PC-3 (cell line): ENCODE measurements at regions of chr20 and their contacts with region 1.

Region 1: DNA sequence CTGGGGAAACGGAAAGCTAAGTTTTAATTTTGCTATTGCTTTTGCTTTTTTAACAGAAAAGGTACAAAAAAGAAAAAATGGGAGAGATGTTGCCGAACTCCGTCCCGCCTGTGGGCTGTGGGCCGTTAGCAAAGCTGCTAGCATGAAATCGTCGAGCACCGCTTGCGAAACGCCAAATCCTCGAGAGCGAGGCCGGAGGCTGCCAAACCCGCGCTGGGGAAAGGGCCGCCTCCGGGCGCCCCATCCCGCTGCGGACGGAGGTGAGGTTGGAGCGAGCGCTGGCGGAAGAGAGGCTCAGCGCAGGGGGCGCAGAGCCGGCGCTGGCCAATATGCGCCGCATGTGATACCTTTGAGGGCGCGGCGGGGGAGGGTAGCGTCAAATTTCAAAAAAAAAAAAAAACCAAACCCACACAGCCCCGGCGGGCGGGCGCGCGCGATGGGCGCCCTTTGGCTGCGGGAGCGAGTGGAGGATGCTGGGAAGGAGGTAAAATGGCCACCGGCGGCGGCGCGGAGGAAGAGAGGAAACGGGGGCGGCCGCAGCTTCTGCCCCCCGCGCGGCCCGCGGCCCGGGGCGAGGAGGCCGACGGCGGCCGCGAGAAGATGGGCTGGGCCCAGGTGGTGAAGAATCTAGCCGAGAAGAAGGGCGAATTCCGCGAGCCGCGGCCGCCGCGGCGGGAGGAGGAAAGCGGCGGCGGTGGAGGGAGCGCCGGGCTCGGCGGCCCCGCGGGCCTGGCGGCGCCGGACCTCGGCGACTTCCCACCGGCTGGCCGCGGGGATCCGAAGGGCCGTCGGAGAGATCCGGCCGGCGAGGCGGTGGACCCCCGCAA is at the start of gene ZCCHC3:
- DNase-seq: peak; percentile 96
- ATAC-seq: peak; percentile 85
- H3K4me3 ChIP-seq: peak within 1 kb of the TSS; percentile 80
- H3K27ac ChIP-seq: peak within 1 kb of the TSS; percentile 75
- H3K4me1 ChIP-seq: peaks cover 29% of the 10 kb centered on the region
- H3K27me3 ChIP-seq: no peaks in the 10 kb centered on the region
- CTCF ChIP-seq: 0 out of 2 replicates have a peak, but pooled peaks have one; percentile 29
- total RNA-seq, gene ZCCHC3: 18.5 and 21.5 TPM in 2 replicates

Region 2: GRCh38 chr20:226958-227357 is 70.4 kb before region 1 on chr20 and contains the start of gene DEFB129:
- CTCF ChIA-PET with region 1: no interaction called
- POLR2A ChIA-PET with region 1: interaction called, 44 read pairs
- intact Hi-C with region 1: no loop called
- DNase-seq: no peak
- ATAC-seq: no peak
- H3K4me3 ChIP-seq: no peak within 1 kb of the TSS
- H3K27ac ChIP-seq: no peak within 1 kb of the TSS
- H3K4me1 ChIP-seq: no peaks in the 10 kb centered on the region
- H3K27me3 ChIP-seq: peaks cover 41% of the 10 kb centered on the region
- CTCF ChIP-seq: no peak
- total RNA-seq, gene DEFB129: not detected in 2 replicates

Region 3: GRCh38 chr20:324177-325044 is 27.1 kb after region 1 on chr20:
- CTCF ChIA-PET with region 1: no interaction called
- POLR2A ChIA-PET with region 1: interaction called, 4 read pairs
- intact Hi-C with region 1: loop called (anchors 1 kb)
- DNase-seq: peak; percentile 97
- ATAC-seq: peak; percentile 55
- H3K4me3 ChIP-seq: peak overlapping the region; percentile 69
- H3K27ac ChIP-seq: peak overlapping the region; percentile 71
- H3K4me1 ChIP-seq: peaks cover 29% of the 10 kb centered on the region
- H3K27me3 ChIP-seq: no peaks in the 10 kb centered on the region
- CTCF ChIP-seq: 0 out of 2 replicates have a peak, but pooled peaks have one; percentile 21

Region 4: DNA sequence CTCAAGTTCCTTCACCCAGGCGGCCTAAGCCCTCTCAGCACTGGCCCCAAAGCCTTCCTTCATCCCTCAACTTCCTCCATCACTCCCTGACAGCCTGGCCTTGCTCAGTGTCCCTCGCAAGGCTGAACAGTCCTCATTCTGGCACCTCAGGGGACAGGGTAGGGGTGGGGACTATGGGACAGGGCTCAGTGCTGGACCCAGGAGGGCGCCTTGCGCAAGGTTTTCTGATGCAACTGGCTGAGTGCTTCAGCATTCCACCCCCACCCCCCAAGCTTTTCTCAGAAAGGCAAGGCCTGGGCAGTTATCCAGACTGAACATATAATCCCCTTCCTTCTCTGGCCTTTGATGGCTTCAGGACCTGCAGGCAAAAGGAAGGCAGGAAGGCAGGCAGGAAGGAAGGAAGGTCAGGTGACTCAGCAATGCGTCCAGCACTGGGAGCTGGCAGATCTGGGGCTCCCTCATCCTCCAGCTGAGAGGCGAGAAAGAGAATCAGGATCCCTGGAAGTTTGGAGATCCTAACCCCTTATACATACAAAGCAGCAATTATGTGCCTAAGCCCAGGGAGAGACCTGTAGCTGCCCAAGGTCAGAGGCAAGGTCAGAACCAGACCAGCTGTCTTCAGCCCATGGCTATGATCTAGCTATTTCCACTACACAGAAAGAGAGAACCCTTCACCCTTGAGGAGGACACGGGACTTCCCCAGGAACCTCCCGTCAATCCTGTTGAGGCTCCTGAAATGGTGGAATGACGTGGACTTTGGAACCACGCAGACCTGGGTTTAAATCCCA is 74.6 kb after region 1 on chr20:
- CTCF ChIA-PET with region 1: no interaction called
- POLR2A ChIA-PET with region 1: no interaction called
- intact Hi-C with region 1: no loop called
- DNase-seq: peak; percentile 98
- ATAC-seq: peak; percentile 79
- H3K4me3 ChIP-seq: no peak overlapping the region
- H3K27ac ChIP-seq: peak overlapping the region; percentile 92
- H3K4me1 ChIP-seq: peaks cover 59% of the 10 kb centered on the region
- H3K27me3 ChIP-seq: no peaks in the 10 kb centered on the region
- CTCF ChIP-seq: no peak